ENCODE measurements at regions of chr18 and their contacts with region 1.

Region 1: GRCh38 chr18:31506024-31506742 is 8.2 kb downstream of the DSG2 start:
- DNase-seq: no peak
- ATAC-seq: no peak

Region 2: GRCh38 chr18:30999186-30999585 is 507.0 kb before region 1 on chr18:
- intact Hi-C with region 1: loop called (anchors 10 kb)
- DNase-seq: no peak
- ATAC-seq: no peak

Region 3: GRCh38 chr18:31064130-31064529 is 442.1 kb before region 1 on chr18:
- intact Hi-C with region 1: no loop called
- DNase-seq: no peak
- ATAC-seq: no peak

Region 4: DNA sequence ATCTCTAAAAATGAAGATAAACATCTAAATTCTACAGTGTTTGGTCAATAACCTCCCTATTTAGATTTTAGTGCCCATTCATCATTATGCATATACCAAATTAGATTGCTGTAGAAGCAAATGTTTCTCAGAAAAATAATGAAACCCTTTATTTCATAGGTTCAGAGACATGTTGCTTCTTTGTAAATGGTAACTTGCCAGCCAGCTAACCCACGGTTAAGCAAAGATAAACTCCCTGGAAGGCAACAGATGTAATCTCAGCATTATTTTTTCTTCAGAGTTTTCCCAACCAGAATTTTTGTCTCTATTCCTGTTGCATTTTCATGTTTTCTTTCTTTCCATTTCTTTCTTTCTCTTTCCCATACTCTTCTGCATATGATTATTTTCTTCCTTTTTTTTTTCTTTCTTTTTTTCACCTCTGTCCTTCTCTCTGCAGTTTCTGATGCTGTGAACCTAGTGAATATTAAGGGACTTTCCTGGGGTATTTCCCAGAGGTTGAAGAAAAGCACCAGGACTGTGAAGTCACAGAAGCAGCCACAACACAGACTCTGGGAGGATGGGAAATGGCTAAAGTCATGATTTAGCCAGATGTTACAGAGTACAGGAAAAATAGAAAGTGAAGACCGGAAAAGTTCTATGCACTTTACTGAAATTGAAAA is 238.2 kb before region 1 on chr18:
- intact Hi-C with region 1: loop called (anchors 2 kb)
- DNase-seq: no peak
- ATAC-seq: no peak

Region 5: GRCh38 chr18:31789409-31790055 is 283.3 kb after region 1 on chr18:
- intact Hi-C with region 1: no loop called
- DNase-seq: no peak
- ATAC-seq: no peak

Measured in Right ventricle myocardium inferior (tissue), 1 donor.